SK-N-SH (cell line): ENCODE measurements at regions of chr1 and their contacts with region 1.

Region 1: GRCh38 chr1:204806943-204807687 is 63.5 kb upstream of the NFASC start:
- DNase-seq: peak; percentile 89
- H3K4me3 ChIP-seq: peak overlapping the region; percentile 50 to 81
- H3K27ac ChIP-seq: no peak overlapping the region; a peak in 1 of 4 replicates
- H3K4me1 ChIP-seq: peaks cover 0 to 2% of the 10 kb centered on the region in 2 experiments; a peak in 1 of 4 replicates
- H3K27me3 ChIP-seq: 0 out of 2 replicates have a peak, but pooled peaks cover 2% of the 10 kb centered on the region
- CTCF ChIP-seq: peak; percentile 100
- EP300 ChIP-seq: no peak
- RAD21 ChIP-seq: peak; percentile 72

Region 2: DNA sequence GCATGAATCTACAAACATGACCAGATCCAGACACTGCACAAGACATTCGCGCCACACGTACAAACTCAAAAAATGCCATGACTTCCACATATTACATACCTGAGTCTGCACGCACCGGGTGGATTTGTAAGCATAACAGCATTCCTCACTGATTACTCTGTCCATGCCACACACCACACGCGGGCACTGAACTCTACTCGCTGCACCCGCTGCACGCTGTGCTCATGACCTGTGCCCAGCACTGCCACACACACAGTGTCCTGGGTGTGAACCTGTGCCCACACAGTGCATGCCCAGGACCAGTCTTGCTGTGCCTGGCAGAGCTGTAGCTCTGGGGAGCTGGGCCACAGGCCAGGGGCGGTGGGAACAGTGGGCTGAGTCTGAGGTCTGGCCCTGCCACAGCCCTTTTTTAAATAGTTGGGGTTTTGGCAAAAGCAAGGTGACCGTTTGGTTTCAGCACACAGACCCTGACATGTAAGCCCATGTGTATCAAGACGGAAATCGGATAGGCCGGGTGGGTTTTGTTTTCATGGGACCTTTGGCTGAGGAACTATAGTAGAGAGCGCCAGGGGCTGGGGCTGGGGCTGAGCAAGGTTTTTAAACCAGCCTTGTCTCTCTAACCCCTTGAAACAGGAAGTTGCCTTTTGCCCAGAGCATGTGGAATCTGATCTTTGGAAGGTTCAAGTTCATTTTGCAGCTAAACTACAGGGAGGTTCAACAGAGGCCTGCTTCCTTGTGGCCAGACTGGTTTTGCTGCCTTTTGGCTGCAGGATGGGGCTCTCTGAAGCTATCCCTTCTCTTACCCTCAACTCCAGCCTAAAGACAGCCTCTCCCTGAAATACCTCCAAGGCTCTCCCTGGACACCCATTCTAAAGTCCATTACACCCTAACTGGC is 581.0 kb before region 1 on chr1:
- CTCF ChIA-PET with region 1: no interaction called
- POLR2A ChIA-PET with region 1: no interaction called
- DNase-seq: no peak
- H3K4me3 ChIP-seq: no peak overlapping the region
- H3K27ac ChIP-seq: no peak overlapping the region
- H3K4me1 ChIP-seq: peaks cover 0 to 13% of the 10 kb centered on the region in 2 experiments; a peak in 2 of 4 replicates
- H3K27me3 ChIP-seq: no peaks in the 10 kb centered on the region
- CTCF ChIP-seq: no peak
- EP300 ChIP-seq: no peak
- RAD21 ChIP-seq: no peak

Region 3: GRCh38 chr1:204549313-204549712 is 257.8 kb before region 1 on chr1:
- CTCF ChIA-PET with region 1: interaction called, 54 read pairs
- POLR2A ChIA-PET with region 1: no interaction called
- DNase-seq: no peak
- H3K4me3 ChIP-seq: no peak overlapping the region
- H3K27ac ChIP-seq: no peak overlapping the region
- H3K4me1 ChIP-seq: peaks cover 0 to 3% of the 10 kb centered on the region in 2 experiments; a peak in 1 of 4 replicates
- H3K27me3 ChIP-seq: no peaks in the 10 kb centered on the region
- CTCF ChIP-seq: no peak
- EP300 ChIP-seq: no peak
- RAD21 ChIP-seq: no peak

Region 4: GRCh38 chr1:204640578-204640977 is 166.5 kb before region 1 on chr1:
- CTCF ChIA-PET with region 1: interaction called, 24 read pairs
- POLR2A ChIA-PET with region 1: no interaction called
- DNase-seq: no peak
- H3K4me3 ChIP-seq: no peak overlapping the region
- H3K27ac ChIP-seq: no peak overlapping the region
- H3K4me1 ChIP-seq: peaks cover 0 to 20% of the 10 kb centered on the region in 2 experiments; a peak in 2 of 4 replicates
- H3K27me3 ChIP-seq: no peaks in the 10 kb centered on the region; the same call in 1 of the 2 replicates
- CTCF ChIP-seq: no peak
- EP300 ChIP-seq: no peak
- RAD21 ChIP-seq: no peak

Region 5: GRCh38 chr1:204751894-204752687 is 55.0 kb before region 1 on chr1:
- CTCF ChIA-PET with region 1: interaction called, 32 read pairs
- POLR2A ChIA-PET with region 1: no interaction called
- DNase-seq: no peak
- H3K4me3 ChIP-seq: no peak overlapping the region
- H3K27ac ChIP-seq: no peak overlapping the region
- H3K4me1 ChIP-seq: peaks cover 0 to 4% of the 10 kb centered on the region in 2 experiments; a peak in 1 of 4 replicates
- H3K27me3 ChIP-seq: no peaks in the 10 kb centered on the region
- CTCF ChIP-seq: no peak
- EP300 ChIP-seq: no peak
- RAD21 ChIP-seq: no peak

Region 6: DNA sequence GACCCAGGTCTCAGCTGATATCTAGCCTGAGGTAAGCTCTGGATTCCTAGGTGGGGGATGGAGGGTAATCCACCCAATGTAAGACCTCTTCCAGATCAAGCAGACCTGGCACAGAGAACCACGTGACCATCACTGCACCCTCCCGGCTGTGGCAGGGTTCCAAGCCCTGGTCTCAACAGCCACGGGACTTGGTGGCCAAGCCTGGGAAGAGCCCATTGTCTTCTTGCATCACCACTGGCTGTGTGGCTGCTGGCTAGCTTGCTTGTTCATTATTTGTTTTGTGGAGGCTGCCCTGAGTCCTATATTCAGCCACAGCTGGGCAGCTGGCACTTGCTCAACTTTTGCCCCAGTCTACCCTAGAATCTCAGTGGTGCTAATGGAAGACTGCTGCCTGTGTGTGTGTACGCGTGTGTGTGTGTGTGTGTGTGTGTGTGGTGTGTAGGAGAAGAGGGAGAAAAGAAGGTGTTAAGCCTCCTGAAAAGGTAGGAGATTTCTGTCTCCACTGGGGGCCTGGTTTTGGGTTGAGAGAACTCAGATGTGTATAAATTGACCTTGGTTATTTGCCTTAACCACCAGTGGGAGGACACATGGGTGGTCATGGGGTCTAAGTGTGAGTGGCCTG is 39.5 kb after region 1 on chr1:
- CTCF ChIA-PET with region 1: interaction called, 22 read pairs
- POLR2A ChIA-PET with region 1: no interaction called
- DNase-seq: no peak
- H3K4me3 ChIP-seq: no peak overlapping the region
- H3K27ac ChIP-seq: no peak overlapping the region
- H3K4me1 ChIP-seq: no peaks in the 10 kb centered on the region
- H3K27me3 ChIP-seq: no peaks in the 10 kb centered on the region
- CTCF ChIP-seq: no peak
- EP300 ChIP-seq: no peak
- RAD21 ChIP-seq: no peak

Region 7: GRCh38 chr1:204950353-204951001 is 143.4 kb after region 1 on chr1:
- CTCF ChIA-PET with region 1: interaction called, 337 read pairs
- POLR2A ChIA-PET with region 1: no interaction called
- DNase-seq: no peak
- H3K4me3 ChIP-seq: no peak overlapping the region
- H3K27ac ChIP-seq: no peak overlapping the region
- H3K4me1 ChIP-seq: no peaks in the 10 kb centered on the region
- H3K27me3 ChIP-seq: no peaks in the 10 kb centered on the region
- CTCF ChIP-seq: no peak
- EP300 ChIP-seq: no peak
- RAD21 ChIP-seq: no peak

Region 8: GRCh38 chr1:205227584-205228006 is 420.5 kb after region 1 on chr1 and contains the start of gene TMCC2:
- CTCF ChIA-PET with region 1: no interaction called
- POLR2A ChIA-PET with region 1: no interaction called
- DNase-seq: peak; percentile 99
- H3K4me3 ChIP-seq: peak within 1 kb of the TSS; percentile 78 to 81
- H3K27ac ChIP-seq: peak within 1 kb of the TSS in 1 of 2 experiments; percentile 56; a peak in 1 of 4 replicates
- H3K4me1 ChIP-seq: peaks cover 4 to 21% of the 10 kb centered on the region in 2 experiments; a peak in 2 of 4 replicates
- H3K27me3 ChIP-seq: no peaks in the 10 kb centered on the region
- CTCF ChIP-seq: no peak
- EP300 ChIP-seq: no peak
- RAD21 ChIP-seq: peak; percentile 8; the same call in 1 of the 2 replicates
- polyA plus RNA-seq, gene TMCC2: 5.3 and 6.0 TPM in 2 replicates